Common myeloid progenitor, CD34-positive (primary cell): ENCODE measurements at regions of chr16 and their contacts with region 1.

Region 1: GRCh38 chr16:1290063-1290501 is 19.4 kb upstream of the UBE2I start:
- DNase-seq: peak in 2 of 3 donors; percentile 40 to 54
- H3K4me3 ChIP-seq: no peak overlapping the region
- H3K27ac ChIP-seq: no peak overlapping the region
- H3K4me1 ChIP-seq: peaks cover 0 to 12% (median 7%) of the 10 kb centered on the region in 4 experiments
- H3K27me3 ChIP-seq: peaks cover 0 to 73% (median 33%) of the 10 kb centered on the region in 5 experiments

Region 2: DNA sequence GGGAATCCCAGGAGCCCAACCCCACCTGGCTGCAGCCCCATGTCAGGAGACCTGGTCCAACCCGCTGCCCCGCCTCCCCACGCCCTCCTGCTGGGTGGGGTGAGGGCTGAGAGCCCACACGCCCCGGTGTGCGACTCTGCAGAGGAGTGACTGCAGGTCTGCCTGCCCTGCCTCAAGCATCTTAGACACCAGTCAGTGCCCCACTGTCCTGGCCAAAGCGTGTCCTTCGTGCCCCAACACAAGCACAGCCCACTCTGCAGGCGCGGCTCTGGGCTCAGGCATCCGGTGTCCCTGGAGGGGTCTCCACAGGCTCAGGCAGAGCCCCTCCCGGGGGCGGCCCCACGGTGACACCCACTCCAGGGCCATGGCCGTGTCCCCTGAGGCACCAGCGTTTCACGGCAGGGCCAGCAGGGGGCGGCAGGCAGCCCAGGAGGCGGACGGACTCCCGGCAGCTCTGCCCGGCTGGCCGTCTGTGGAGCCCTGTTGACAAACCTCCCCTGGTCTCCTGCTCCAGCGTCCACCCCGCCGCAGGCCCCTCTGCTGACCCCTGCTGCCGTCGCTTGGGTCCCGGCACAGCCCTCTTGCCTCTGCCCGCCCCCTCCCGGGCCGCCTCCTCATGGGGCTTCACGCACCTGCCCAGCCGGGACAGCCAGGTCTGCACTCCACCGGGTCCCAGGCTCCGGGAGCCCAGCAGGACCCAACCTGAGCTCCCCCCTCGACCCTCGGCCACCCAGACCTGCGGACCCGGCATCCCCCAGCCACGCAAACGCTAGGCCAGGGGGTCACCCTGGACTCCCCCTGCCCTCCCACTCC is 10.8 kb after region 1 on chr16:
- CTCF ChIA-PET with region 1: interaction called, 11 read pairs
- POLR2A ChIA-PET with region 1: no interaction called
- DNase-seq: peak; percentile 42 to 62 (median 58)
- H3K4me3 ChIP-seq: peak overlapping the region in 4 of 7 experiments; percentile 13 to 54 (median 33)
- H3K27ac ChIP-seq: no peak overlapping the region
- H3K4me1 ChIP-seq: peaks cover 0 to 22% (median 18%) of the 10 kb centered on the region in 4 experiments
- H3K27me3 ChIP-seq: peaks cover 0 to 13% (median 0%) of the 10 kb centered on the region in 5 experiments

Region 3: DNA sequence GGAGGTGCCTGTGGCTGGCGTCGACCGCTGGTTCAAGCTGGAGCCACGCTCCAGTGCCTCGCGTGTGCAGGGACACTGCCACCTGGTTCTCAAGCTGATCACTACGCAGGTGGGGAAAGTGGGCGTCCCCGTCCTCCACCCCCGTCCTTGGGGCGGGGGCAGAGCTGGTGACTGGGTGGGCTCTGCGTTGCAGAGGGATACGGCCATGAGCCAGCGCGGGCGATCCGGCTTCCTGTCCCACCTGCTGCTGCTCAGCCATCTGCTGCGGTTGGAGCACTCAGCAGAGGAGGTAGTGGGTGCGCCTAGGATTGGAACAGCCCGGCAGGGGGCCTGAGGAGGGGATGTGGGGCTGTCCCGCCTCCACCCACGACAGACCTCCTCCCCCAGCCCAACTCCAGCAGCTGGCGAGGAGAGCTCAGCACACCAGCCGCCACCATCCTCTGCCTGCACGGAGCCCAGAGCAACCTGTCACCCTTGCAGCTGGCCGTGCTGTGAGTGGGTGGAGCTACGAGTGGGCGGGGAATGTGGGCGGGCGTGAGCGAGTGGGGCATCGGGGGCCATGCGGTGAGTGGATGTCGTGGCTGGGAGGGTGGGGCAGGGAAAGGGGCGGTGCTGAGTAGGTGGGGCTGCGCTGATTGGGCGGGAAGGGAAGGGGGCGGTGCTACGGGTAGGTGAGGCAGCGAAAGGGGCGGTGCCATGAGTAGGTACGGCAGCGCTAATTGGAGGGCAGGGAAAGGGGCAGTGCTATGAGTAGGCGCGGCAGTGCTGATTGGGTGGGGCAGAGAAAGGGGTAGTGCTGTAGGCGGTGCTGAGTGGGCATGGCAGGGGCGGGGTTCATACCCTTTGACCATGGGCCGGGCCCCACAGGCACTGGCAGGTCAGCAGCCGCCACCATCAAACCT is 52.7 kb after region 1 on chr16:
- CTCF ChIA-PET with region 1: no interaction called
- POLR2A ChIA-PET with region 1: no interaction called
- DNase-seq: peak; percentile 96 to 99 (median 98)
- H3K4me3 ChIP-seq: peak overlapping the region in 5 of 7 experiments; percentile 26 to 63 (median 51)
- H3K27ac ChIP-seq: no peak overlapping the region
- H3K4me1 ChIP-seq: peaks cover 0 to 24% (median 19%) of the 10 kb centered on the region in 4 experiments
- H3K27me3 ChIP-seq: no peaks in the 10 kb centered on the region